IMR-90 (cell line): ENCODE measurements at regions of chr4 and their contacts with region 1.

Region 1: GRCh38 chr4:87375719-87376291 is 15.2 kb downstream of the HSD17B11 start:
- DNase-seq: peak; percentile 88
- ATAC-seq: peak; percentile 85
- H3K4me3 ChIP-seq: no peak overlapping the region
- H3K27ac ChIP-seq: no peak overlapping the region
- H3K4me1 ChIP-seq: no peaks in the 10 kb centered on the region; the same call in 1 of the 2 replicates
- H3K27me3 ChIP-seq: no peaks in the 10 kb centered on the region
- CTCF ChIP-seq: peak; percentile 81
- POLR2A ChIP-seq: no peak
- RAD21 ChIP-seq: peak; percentile 86

Region 2: DNA sequence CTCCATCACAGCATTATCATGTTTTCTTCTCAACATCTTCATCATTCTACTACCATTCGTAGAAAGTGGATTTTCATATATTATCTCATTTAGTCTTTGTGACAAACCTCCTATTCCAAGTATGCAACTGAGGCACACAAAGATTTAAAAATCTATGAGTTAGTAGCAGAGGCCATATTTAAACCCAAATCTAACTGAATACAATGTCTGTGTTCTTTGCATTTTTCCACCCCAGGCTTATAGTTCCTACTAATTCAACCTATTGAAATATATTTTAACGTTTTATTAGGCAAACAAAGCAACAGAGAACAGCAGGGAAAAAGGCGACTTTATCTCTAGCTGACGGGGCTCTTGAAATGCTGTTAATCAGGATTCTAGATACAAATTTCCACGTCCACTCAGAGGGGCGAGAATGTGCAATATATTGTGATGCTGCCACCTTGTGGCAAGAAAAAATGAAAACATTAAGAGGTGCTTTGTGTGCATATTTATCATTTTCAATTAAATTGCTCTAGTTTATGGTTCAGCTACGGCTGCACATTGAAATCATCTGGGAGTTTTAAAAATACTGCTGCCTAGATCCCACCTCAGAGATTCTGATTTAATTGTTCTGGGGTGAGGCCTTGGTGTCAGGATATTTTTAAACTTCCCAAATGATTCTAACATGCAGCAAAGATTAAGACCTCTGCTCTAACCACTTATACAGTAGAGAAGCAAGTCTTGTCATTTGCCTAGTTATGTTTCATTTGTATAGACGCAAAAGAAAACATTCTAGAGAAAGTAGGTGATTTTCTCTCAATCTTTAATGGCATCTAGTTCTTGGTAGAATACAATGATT is 1331.8 kb before region 1 on chr4:
- CTCF ChIA-PET with region 1: no interaction called
- POLR2A ChIA-PET with region 1: no interaction called
- dilution Hi-C with region 1: no loop called
- in situ Hi-C with region 1: no loop called
- intact Hi-C with region 1: no loop called
- DNase-seq: peak; percentile 55
- ATAC-seq: peak; percentile 74
- H3K4me3 ChIP-seq: no peak overlapping the region
- H3K27ac ChIP-seq: no peak overlapping the region
- H3K4me1 ChIP-seq: no peaks in the 10 kb centered on the region
- H3K27me3 ChIP-seq: no peaks in the 10 kb centered on the region
- CTCF ChIP-seq: peak; percentile 67
- POLR2A ChIP-seq: no peak
- RAD21 ChIP-seq: peak; percentile 79

Region 3: DNA sequence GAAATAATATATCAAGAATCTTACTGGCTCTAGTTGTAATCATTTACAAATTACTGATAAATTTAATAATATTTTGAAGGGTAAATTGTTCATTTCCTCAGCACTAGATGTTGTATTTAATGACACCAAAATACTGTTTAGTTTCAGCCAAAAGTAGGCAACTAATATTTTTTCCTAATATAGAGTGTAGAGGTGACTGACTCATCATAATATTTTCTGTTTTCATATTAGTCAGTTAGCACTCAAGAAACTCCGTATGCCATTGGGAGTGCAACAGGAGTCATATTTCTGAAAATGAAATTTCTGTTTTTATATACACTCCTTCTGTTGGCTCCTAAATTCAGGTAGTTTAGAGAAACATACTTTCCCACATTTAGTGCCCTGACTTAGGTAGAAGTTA is 818.3 kb before region 1 on chr4:
- CTCF ChIA-PET with region 1: no interaction called
- POLR2A ChIA-PET with region 1: no interaction called
- dilution Hi-C with region 1: no loop called
- in situ Hi-C with region 1: no loop called
- intact Hi-C with region 1: no loop called
- DNase-seq: peak; percentile 5
- ATAC-seq: no peak
- H3K4me3 ChIP-seq: no peak overlapping the region
- H3K27ac ChIP-seq: no peak overlapping the region
- H3K4me1 ChIP-seq: no peaks in the 10 kb centered on the region
- H3K27me3 ChIP-seq: peaks cover 2% of the 10 kb centered on the region; the same call in 1 of the 2 replicates
- CTCF ChIP-seq: no peak
- POLR2A ChIP-seq: no peak
- RAD21 ChIP-seq: no peak

Region 4: DNA sequence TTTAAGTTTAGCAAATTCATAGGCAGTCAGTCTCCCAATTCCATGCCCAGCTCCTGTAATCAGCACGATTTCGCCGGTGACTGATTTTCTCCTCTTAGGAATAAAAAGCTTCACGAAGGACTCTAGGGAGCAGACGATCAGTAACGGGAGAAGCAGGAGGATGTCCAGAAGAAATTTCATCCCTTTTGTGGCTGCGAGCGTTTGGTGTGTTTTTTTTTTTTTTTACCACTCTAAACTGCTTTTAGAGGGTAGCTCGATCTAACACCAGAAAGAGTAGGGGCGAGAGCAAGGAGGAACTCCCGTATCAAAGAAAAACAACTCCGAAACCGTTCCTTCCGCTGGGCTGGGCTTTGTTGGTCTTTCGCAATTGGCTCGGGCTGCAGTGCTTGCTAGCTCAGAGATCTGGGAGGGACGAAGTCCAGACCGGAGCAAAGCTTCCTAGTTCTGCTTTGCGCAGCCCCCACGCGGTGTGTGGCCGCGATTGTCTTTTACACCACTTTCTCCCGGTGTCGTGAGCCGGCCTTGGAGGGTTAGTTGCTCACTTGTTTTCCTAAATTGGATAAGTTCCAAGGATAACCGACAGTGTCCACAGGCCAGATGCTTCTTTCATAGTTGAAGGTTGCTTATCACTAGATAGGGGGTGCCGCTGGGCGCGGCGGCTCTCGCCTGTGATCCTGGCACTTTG is 15.2 kb after region 1 on chr4 and contains the start of gene HSD17B11:
- CTCF ChIA-PET with region 1: interaction called, 6 read pairs
- POLR2A ChIA-PET with region 1: no interaction called
- dilution Hi-C with region 1: no loop called
- in situ Hi-C with region 1: no loop called
- intact Hi-C with region 1: loop called (anchors 2 kb)
- DNase-seq: peak; percentile 93
- ATAC-seq: peak; percentile 100
- H3K4me3 ChIP-seq: peak within 1 kb of the TSS; percentile 66
- H3K27ac ChIP-seq: peak within 1 kb of the TSS; percentile 82
- H3K4me1 ChIP-seq: 0 out of 2 replicates have a peak, but pooled peaks cover 2% of the 10 kb centered on the region
- H3K27me3 ChIP-seq: no peaks in the 10 kb centered on the region
- CTCF ChIP-seq: peak; percentile 7; the same call in 1 of the 2 replicates
- POLR2A ChIP-seq: no peak
- RAD21 ChIP-seq: no peak
- total RNA-seq, gene HSD17B11: 11.3 and 28.6 TPM in 2 replicates

Region 5: DNA sequence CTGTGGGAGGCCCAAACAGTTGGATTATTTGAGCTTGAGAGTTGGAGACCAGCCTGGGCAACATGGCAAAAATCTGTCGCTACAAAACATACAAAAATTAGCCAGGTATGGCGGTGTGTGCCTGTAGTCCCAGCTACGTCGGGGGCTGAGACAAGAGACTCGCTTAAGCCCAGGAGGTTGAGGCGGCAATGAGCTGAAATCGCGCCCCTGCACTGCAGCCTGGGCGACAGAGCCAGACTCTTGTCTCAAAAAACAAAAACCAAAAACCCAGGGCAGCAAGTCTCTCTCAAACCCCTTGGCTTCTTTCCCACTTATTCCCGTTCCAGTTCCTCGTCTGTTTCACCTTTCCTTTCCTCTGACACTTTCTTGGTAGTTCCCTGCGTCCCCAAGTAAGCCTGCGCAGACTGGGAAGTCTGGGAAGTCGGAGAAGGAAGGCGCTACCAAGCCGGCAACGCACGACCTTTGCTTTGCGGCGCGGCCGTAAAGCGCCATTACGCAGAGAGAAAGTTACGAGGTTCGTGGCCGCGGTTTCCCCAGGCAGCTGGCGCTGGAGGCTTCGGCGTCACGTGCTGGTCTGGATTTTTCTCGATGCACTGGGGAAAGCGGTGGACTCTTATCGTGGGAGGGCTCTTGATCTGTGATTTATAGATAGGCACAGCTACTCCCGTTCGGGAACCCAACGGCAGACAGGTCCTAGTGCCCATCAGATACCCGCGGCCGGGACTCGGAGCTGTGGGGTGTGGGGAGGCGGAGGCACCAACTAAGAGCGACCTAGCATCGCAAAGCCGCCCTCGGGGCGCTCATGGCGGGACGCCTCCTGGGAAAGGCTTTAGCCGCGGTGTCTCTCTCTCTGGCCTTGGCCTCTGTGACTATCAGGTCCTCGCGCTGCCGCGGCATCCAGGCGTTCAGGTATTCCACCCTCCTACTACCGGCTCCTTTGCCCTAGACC is 46.6 kb after region 1 on chr4 and contains the start of gene NUDT9:
- CTCF ChIA-PET with region 1: interaction called, 6 read pairs
- POLR2A ChIA-PET with region 1: no interaction called
- dilution Hi-C with region 1: no loop called
- in situ Hi-C with region 1: no loop called
- intact Hi-C with region 1: loop called (anchors 5 kb)
- DNase-seq: peak; percentile 96
- ATAC-seq: peak; percentile 96
- H3K4me3 ChIP-seq: peak within 1 kb of the TSS; percentile 64
- H3K27ac ChIP-seq: peak within 1 kb of the TSS; percentile 78
- H3K4me1 ChIP-seq: peaks cover 4% of the 10 kb centered on the region
- H3K27me3 ChIP-seq: no peaks in the 10 kb centered on the region
- CTCF ChIP-seq: no peak
- POLR2A ChIP-seq: peak; percentile 74
- RAD21 ChIP-seq: 0 out of 2 replicates have a peak, but pooled peaks have one; percentile 1
- total RNA-seq, gene NUDT9: 10.0 and 14.2 TPM in 2 replicates

Region 6: DNA sequence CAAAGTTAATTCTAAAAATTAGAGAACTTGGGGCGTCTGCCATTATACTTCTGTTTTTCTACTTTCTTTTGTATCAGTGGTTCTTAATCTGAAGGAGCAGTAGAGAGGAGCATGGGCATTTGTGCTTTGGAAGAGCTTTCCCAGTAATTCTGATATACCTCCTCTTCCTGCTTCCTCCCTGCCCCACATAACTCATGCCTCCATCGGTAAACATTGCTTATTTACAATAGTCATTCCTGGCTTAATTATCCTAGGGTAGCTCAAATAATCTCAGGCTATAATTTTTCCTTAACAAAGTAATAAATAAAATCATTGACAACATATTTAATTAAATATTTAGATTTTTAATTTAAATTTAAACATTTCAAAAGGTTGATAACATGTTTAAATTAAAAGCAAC is 190.5 kb after region 1 on chr4:
- CTCF ChIA-PET with region 1: no interaction called
- POLR2A ChIA-PET with region 1: no interaction called
- dilution Hi-C with region 1: no loop called
- in situ Hi-C with region 1: no loop called
- intact Hi-C with region 1: no loop called
- DNase-seq: no peak
- ATAC-seq: no peak
- H3K4me3 ChIP-seq: no peak overlapping the region
- H3K27ac ChIP-seq: no peak overlapping the region
- H3K4me1 ChIP-seq: no peaks in the 10 kb centered on the region
- H3K27me3 ChIP-seq: no peaks in the 10 kb centered on the region
- CTCF ChIP-seq: no peak
- POLR2A ChIP-seq: no peak
- RAD21 ChIP-seq: no peak

Region 7: DNA sequence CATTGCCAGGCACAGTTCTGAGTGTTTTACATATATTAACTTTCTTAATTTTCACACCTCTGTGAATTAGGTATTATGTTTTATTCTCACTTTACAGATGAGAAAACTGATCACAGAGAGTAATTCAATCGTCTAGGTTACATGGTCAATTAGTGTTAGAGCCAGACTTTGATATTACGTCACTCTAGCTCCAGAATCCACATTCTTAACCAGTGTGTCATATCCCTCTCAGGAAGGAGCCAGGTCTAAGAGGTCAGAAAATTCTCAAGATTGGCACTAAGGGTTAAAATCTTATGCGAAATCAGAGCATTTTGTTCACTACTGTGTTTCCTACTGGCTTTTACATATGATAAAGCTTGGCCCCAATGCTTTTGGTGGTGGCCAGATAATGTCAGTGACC is 281.7 kb after region 1 on chr4:
- CTCF ChIA-PET with region 1: no interaction called
- POLR2A ChIA-PET with region 1: no interaction called
- dilution Hi-C with region 1: no loop called
- in situ Hi-C with region 1: no loop called
- intact Hi-C with region 1: loop called (anchors 10 kb)
- DNase-seq: peak; percentile 40
- ATAC-seq: no peak
- H3K4me3 ChIP-seq: no peak overlapping the region
- H3K27ac ChIP-seq: no peak overlapping the region
- H3K4me1 ChIP-seq: no peaks in the 10 kb centered on the region
- H3K27me3 ChIP-seq: no peaks in the 10 kb centered on the region
- CTCF ChIP-seq: no peak
- POLR2A ChIP-seq: no peak
- RAD21 ChIP-seq: no peak